ENCODE measurements at regions of chr21 and their contacts with region 1.

Region 1: GRCh38 chr21:22019766-22020165 is 1021.6 kb downstream of the NCAM2 start:
- DNase-seq: no peak

Region 2: DNA sequence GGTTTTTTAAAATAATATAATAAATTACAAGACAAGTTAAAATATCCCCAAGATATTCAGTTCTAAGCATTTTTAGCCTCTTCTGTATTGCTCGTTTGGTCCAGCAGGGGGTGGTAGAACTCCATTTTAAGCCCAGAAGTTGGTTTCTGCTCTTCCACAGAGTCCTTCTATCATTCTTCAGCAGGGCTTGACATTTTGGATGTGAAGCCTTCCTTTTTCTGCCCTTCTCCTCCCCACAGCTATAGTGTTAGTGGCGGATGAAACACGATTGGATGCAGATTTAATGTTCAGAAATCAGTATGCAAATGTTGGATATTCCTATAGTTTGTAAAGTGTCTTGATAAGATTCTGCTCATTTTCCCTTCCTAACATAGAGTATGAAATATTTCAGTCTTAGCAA is 1020.1 kb before region 1 on chr21:
- intact Hi-C with region 1: loop called in 1 of 2 experiments (anchors 10 kb)
- DNase-seq: no peak

Region 3: DNA sequence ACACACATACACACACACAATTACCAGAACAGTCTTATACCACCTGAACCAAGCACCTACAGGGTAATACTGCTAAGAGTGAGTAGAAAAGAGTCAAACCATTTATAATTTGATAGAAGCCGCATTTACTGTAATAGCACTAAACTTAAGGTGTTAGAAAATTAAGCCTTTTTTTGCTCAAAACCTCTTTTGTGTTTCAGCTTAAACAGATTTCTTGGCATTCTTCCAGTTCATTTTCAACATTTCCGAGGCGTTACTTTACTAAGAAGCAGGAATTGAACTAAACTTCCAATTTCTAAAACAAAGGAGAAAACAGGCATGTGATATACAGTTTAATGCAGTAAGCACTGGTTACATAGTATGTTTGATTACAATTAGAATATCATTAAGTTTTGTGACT is 634.4 kb before region 1 on chr21:
- intact Hi-C with region 1: no loop called
- DNase-seq: no peak

Region 4: GRCh38 chr21:21973806-21974205 is 46.0 kb before region 1 on chr21:
- intact Hi-C with region 1: no loop called
- DNase-seq: no peak

Region 5: GRCh38 chr21:22125581-22125980 is 105.8 kb after region 1 on chr21:
- intact Hi-C with region 1: no loop called
- DNase-seq: no peak